ENCODE measurements at regions of chr12 and their contacts with region 1.

Region 1: DNA sequence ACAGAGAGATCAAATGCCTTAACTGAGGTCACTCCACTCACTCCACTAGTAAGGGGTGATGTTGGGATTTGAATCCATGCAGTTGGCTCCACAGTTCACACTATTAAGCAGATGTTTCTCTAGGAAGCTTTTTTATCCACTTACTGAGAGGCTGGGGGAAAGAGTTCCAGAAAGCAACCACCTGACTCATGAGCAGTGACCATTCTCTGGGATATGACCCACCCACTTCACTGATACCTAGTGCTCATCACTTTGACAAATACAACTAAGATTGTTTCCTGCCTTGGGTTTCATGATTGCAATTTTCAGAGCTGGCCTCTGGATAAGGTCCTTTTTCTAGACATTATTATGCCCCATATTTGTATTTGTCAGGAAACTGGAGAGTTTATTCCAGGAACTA is 152.1 kb upstream of the PLEKHG7 start:
- DNase-seq: no peak
- H3K4me3 ChIP-seq: no peak overlapping the region
- H3K27me3 ChIP-seq: no peaks in the 10 kb centered on the region
- CTCF ChIP-seq: no peak

Region 2: GRCh38 chr12:92170050-92170449 is 380.6 kb before region 1 on chr12:
- CTCF ChIA-PET with region 1: no interaction called
- POLR2A ChIA-PET with region 1: interaction called, 10 read pairs
- DNase-seq: no peak
- H3K4me3 ChIP-seq: no peak overlapping the region
- H3K27me3 ChIP-seq: no peaks in the 10 kb centered on the region
- CTCF ChIP-seq: no peak

Region 3: DNA sequence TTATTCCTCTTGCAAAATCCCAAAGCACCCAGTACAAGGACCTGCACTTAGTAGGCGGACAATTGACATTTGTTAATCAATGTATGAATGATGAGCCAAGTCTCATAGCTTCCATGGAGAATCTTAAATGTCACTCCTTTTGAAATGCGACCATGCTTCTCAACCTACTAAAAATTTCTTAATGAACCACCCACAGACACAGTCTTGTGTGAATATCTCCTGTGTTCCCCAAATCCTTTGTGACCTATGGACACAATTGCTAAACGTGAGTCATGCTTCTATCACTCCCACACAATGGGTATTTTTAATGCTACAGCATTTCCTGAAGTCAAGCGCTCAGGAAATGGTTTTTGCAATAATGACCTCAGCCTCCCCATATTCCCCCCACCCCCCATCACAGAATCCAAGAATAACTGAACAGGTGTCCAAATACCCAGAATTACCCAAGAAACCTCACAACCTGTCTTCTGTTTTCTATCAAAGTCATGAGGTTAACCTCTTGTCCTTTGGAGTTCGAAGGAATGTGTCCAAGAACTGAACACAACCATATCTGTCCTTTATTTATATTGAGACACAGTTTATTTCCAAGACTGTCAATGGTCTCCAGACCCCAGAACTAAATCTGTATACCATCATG is 11.4 kb before region 1 on chr12:
- CTCF ChIA-PET with region 1: no interaction called
- POLR2A ChIA-PET with region 1: no interaction called
- DNase-seq: no peak
- H3K4me3 ChIP-seq: no peak overlapping the region
- H3K27me3 ChIP-seq: no peaks in the 10 kb centered on the region
- CTCF ChIP-seq: no peak

Region 4: GRCh38 chr12:92561543-92561899 is 10.9 kb after region 1 on chr12:
- CTCF ChIA-PET with region 1: no interaction called
- POLR2A ChIA-PET with region 1: no interaction called
- DNase-seq: peak; percentile 35
- H3K4me3 ChIP-seq: no peak overlapping the region
- H3K27me3 ChIP-seq: no peaks in the 10 kb centered on the region
- CTCF ChIP-seq: no peak

Region 5: DNA sequence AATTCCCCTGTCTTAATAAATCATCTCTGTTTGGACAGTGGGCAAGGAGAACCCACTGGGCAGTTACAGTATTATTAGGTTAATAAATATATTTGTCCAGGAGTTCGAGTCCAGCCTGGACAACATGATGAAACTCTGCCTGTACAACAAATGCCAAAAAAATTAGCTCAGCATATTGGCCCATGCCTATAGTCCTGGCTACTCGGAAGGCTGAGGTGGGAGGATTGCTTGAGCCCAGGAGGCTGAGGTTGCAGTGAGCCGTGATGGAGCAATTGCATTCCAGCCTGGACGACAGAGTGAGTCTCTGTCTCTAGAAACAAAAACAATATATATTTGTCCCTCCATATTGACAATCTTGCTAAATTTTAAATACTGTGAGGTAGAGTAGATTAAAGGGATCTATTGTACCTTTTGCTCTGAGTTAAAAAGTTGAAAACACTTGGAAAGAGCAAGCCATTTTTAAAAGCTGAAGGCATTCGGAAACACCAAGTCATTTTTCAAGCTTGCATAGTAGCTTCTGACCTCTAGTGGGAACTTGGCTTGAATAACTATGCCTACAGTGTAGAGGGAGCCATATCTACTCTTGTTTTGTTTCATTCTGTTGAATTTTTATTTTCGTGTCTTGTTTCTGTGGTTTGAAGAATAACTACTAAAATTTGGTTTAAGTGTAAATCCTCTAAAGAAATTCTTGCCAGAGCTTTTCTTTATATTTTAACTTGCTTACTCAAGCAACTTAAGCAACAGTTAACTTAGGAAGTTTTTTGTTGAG is 393.0 kb after region 1 on chr12:
- CTCF ChIA-PET with region 1: no interaction called
- POLR2A ChIA-PET with region 1: no interaction called
- DNase-seq: no peak
- H3K4me3 ChIP-seq: no peak overlapping the region
- H3K27me3 ChIP-seq: no peaks in the 10 kb centered on the region
- CTCF ChIP-seq: no peak

Region 6: GRCh38 chr12:93098077-93098476 is 547.4 kb after region 1 on chr12:
- CTCF ChIA-PET with region 1: no interaction called
- POLR2A ChIA-PET with region 1: no interaction called
- DNase-seq: no peak
- H3K4me3 ChIP-seq: no peak overlapping the region
- H3K27me3 ChIP-seq: no peaks in the 10 kb centered on the region
- CTCF ChIP-seq: peak; percentile 36; the same call in 1 of the 2 replicates

Measured in BJ (cell line).